Panc1 (cell line): ENCODE measurements at regions of chr3 and their contacts with region 1.

Region 1: DNA sequence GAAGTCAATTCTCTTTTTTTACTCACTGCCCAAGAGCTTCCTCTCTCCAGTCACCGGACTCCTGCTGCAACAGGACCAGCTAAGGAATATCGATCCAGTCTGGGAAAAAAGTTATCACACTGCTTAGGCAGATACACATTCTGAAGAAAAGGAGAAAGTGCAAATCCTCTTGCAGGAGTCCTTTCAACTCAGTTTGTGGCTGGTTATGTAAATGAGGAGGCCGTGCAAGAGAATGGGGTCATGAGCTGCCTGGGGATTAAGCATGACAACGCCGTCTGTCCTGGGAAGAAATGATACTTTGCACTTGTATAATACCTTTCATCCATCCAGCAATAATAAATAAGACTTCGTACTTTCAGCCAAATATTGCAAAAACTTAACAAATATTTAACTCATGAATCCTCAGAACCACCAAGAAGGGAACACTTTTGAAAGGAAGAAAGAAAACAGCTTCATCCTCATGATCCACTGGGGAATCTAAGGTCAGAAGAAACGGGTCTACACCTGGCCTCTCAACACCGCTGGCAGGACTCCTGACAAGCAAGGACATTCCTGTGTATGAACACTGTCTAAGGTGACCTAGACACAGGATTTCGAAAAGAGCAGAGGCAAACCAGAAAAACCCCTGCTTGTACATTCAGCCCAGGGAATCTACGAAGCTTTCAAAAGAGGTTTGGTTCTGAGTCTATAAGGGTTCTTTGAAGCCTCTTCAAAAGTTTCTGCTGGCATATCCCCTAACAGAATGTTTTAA is 13.1 kb upstream of the WWTR1 start:
- DNase-seq: no peak
- ATAC-seq: no peak
- H3K4me3 ChIP-seq: no peak overlapping the region
- H3K27ac ChIP-seq: peak overlapping the region; percentile 15; the same call in 1 of the 2 replicates
- H3K4me1 ChIP-seq: no peaks in the 10 kb centered on the region
- H3K27me3 ChIP-seq: no peaks in the 10 kb centered on the region
- CTCF ChIP-seq: no peak

Region 2: GRCh38 chr3:148797795-148798194 is 873.1 kb before region 1 on chr3:
- CTCF ChIA-PET with region 1: no interaction called
- POLR2A ChIA-PET with region 1: no interaction called
- in situ Hi-C with region 1: no loop called
- intact Hi-C with region 1: no loop called
- DNase-seq: no peak
- ATAC-seq: no peak
- H3K4me3 ChIP-seq: no peak overlapping the region
- H3K27ac ChIP-seq: no peak overlapping the region
- H3K4me1 ChIP-seq: no peaks in the 10 kb centered on the region
- H3K27me3 ChIP-seq: no peaks in the 10 kb centered on the region
- CTCF ChIP-seq: no peak

Region 3: GRCh38 chr3:149688112-149688757 is 17.3 kb after region 1 on chr3:
- CTCF ChIA-PET with region 1: no interaction called
- POLR2A ChIA-PET with region 1: no interaction called
- in situ Hi-C with region 1: no loop called
- intact Hi-C with region 1: no loop called
- DNase-seq: no peak
- ATAC-seq: no peak
- H3K4me3 ChIP-seq: no peak overlapping the region
- H3K27ac ChIP-seq: no peak overlapping the region
- H3K4me1 ChIP-seq: no peaks in the 10 kb centered on the region
- H3K27me3 ChIP-seq: no peaks in the 10 kb centered on the region
- CTCF ChIP-seq: no peak

Region 4: DNA sequence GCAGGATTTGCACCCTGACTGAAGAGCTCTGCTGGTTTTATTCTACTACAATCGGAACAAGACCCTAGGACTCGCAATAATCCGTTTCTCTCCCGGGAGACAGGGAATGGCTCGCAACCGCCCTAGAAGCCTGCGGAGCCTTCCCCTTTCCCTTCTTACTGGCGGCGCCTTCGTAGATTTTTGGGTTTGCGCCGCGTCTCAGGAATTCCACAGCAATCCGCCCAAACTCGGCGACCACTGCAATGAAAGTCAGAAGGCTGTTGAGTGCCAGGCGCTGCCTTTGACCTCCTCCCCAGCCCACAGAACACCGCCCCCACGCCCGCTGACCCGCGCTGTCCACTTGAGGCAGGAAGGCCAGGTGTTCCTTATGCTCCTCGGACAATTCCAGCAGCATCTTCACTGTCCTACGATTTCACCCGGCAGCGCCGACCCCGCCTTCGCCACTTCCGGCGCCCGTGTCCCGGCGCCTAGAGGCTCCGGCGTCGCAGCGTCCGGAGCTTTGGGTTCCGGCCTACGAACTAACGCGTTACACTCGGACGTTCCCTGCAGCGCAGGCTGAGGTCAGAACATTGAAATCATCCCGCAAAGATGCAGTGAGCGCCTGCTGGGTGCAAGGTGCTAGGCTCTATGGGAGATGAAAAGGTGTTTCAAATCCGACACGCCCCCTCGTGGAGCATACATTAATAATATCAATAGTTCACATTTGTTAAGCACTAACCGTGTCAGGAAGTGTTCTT is 81.3 kb after region 1 on chr3 and contains the start of gene COMMD2:
- CTCF ChIA-PET with region 1: no interaction called
- POLR2A ChIA-PET with region 1: interaction called, 13 read pairs
- in situ Hi-C with region 1: no loop called
- intact Hi-C with region 1: no loop called
- DNase-seq: peak; percentile 83
- ATAC-seq: peak; percentile 100
- H3K4me3 ChIP-seq: peak within 1 kb of the TSS; percentile 95 to 98
- H3K27ac ChIP-seq: peak within 1 kb of the TSS; percentile 94
- H3K4me1 ChIP-seq: peaks cover 15% of the 10 kb centered on the region
- H3K27me3 ChIP-seq: no peaks in the 10 kb centered on the region
- CTCF ChIP-seq: peak; percentile 60
- total RNA-seq, gene COMMD2: 70.2 TPM